Cardiac septum (tissue), 1 donor: ENCODE measurements at regions of chr14 and their contacts with region 1.

Region 1: DNA sequence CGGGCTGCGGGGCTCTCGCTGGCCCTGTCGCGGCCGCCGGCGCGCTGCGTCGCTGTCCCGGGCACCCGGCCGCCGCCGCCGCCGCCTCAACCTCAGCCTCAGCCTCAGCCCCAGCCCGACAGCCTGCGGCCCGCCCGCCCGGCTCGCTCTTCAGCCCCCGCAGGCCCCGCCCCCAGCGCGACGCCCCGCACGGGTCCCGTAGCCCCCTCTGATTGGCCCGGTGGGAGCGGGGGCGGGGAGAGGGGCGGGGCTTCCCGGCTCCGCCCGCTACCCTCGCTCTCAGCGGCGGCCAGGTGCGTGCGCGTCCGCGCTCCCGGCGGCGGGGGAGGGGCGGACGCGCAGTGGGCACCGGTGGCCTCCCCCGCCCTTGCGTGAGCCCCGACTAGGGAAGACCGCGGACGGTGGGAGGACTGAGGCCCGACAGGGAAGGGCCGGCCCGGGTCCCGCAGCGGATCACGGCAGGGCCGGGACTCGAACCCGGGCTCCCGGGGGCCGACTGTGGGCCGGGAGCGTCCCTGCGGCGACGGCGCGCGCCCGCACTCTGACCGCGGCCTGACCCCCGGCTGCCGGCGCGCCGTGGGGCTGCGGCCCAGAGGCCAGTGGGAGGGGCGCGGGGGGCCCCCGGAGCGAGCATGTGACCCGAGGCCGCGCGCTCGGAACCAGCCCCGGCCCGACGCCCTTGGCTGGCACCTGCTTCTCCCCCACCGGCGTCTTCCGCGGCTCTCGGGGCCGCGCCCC is at the start of gene PPP1R13B:
- DNase-seq: peak; percentile 96
- total RNA-seq, gene PPP1R13B: 67.8 TPM

Region 2: DNA sequence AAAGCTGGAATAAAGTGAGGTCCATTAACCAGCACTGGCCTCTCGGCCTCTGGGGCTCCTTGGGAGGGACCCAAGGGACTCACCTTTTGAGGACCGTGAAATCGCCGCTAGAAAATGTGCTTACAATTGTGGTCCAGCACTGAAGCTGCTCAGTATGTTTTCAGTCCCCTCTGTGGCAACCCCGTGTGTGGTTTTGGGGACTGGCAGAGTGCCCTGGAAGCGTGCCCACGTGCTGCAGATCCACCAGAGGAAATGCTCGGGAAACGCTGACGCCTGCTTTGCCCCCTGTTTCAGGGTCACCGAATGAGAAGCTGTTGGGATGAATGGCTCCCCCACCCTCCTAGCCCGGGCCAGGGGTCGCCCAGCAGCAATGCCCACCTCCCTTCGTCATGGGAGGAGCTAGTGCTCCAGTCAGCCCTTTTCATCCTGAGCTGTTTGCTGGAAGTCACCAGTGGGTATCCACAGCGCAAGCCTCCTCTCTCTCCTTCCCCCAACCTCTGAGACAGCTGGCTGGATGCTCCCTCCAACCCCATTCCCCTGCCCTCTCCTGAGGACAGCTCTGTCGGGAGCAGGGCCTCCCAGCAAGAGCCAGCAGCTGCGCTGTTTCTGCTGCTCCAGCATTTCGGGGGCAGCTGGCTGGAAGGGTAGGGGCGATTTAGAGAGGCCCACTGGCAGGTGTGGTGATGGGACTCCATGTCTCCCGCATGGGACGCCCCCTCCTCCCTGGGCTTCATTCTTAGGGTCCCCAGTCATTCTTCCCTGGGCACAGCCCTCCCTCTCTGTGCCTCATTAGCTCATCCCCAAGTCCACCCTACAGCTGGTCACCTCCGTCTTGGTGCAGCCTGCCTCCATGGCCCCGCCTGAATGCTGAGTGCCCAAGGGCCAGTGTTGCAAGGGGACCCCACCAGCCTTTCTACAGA is 33.0 kb after region 1 on chr14:
- intact Hi-C with region 1: loop called (anchors 2 kb)
- DNase-seq: no peak